ENCODE measurements at regions of chr17 and their contacts with region 1.

Region 1: GRCh38 chr17:60630352-60630751 is 30.4 kb downstream of the PPM1D start:
- DNase-seq: no peak
- H3K4me3 Mint-ChIP-seq: no peak overlapping the region
- H3K27ac Mint-ChIP-seq: no peak overlapping the region
- H3K4me1 Mint-ChIP-seq: peaks cover 11% of the 10 kb centered on the region
- H3K27me3 Mint-ChIP-seq: no peaks in the 10 kb centered on the region

Region 2: GRCh38 chr17:60435244-60436167 is 194.8 kb before region 1 on chr17:
- intact Hi-C with region 1: no loop called
- DNase-seq: peak; percentile 88
- H3K4me3 Mint-ChIP-seq: no peak overlapping the region
- H3K27ac Mint-ChIP-seq: no peak overlapping the region
- H3K4me1 Mint-ChIP-seq: no peaks in the 10 kb centered on the region
- H3K27me3 Mint-ChIP-seq: peaks cover 2% of the 10 kb centered on the region

Region 3: DNA sequence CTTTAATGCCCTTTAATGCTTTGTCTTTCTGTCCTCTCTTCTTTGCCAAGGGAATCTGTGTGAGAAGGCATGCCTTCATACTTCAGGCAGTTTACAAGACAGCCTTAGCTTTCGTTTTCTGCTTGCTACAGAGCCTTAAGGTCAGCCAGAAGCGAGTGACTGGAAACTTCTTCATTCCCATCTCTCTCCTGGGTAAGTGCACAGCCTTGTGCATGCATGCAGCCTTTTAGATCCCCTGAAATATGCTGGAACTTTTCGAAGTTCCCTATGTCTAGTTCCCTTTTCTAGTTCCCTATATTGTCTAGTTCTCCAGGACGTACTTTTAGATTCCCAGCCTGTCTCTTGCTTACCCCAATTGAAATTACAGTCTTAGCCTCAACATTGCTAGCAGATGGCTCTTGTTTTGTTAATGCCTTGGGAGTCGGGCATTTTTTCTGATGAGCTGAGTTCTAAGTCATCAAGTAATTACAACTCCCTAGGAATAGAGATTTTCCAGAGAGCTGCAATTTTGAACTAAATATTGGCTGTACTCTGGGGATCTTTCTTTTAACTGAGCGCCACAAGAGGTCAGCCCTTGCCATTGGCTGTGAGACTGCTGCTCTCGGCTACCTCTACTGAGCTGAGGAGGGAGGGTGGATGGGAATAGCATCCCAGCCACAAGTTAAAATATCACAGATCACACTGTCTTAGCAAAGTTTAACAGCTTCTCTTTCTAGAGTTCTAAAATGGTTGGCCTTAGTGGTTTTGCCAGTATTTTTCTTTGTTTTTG is 53.0 kb before region 1 on chr17:
- intact Hi-C with region 1: loop called (anchors 10 kb)
- DNase-seq: peak; percentile 70
- H3K4me3 Mint-ChIP-seq: peak overlapping the region; percentile 76
- H3K27ac Mint-ChIP-seq: peak overlapping the region; percentile 26
- H3K4me1 Mint-ChIP-seq: peaks cover 10% of the 10 kb centered on the region
- H3K27me3 Mint-ChIP-seq: peaks cover 8% of the 10 kb centered on the region

Region 4: DNA sequence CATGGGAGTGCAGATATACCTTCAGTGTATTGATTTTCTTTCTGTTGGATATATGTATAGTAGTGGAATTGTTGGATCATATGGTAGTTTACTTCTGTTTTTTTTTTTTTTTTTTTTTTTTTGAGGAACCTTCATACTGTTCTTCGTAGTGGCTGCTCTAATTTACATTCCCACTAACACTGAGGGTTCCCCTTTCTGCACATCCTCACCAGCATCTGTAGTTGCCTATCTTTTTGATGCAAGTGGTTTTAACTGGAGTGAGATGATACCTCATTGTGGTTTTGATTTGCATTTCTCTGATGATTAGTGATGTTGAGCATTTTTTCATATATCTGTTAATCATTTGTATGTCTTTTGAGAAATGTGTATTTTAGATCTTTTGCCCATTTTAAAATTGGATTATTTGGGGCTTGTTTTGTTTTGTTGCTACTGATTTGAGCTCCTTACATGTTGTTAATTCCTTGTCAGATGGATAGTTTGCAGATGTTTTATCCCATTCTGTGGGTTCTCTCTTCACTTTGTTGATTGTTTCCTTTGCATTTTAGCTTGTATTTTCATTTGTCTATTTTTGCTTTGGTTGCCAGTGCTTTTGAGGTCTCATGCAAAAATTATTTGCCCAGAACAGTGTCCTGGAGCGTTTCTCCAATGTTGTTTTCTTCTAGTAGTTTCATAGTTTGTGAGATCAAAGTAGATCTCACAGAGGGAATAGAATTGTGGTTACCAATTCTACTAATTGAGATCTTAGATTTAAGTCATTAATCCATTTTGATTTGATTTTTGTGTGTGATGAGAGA is 22.3 kb after region 1 on chr17:
- intact Hi-C with region 1: no loop called
- DNase-seq: no peak
- H3K4me3 Mint-ChIP-seq: no peak overlapping the region
- H3K27ac Mint-ChIP-seq: no peak overlapping the region
- H3K4me1 Mint-ChIP-seq: peaks cover 17% of the 10 kb centered on the region
- H3K27me3 Mint-ChIP-seq: no peaks in the 10 kb centered on the region

Region 5: GRCh38 chr17:60695960-60696359 is 65.6 kb after region 1 on chr17:
- intact Hi-C with region 1: no loop called
- DNase-seq: no peak
- H3K4me3 Mint-ChIP-seq: no peak overlapping the region
- H3K27ac Mint-ChIP-seq: no peak overlapping the region
- H3K4me1 Mint-ChIP-seq: peaks cover 2% of the 10 kb centered on the region
- H3K27me3 Mint-ChIP-seq: no peaks in the 10 kb centered on the region

Measured in activated CD4-positive, alpha-beta T cell treated with anti-CD3 and anti-CD28 coated beads, Interleukin-2, amount 10 ng/mL, durations not matched to agents 24 days and 14 days (primary cell).